Colonic mucosa (tissue), 4 donors: ENCODE measurements at regions of chr1 and their contacts with region 1.

Region 1: GRCh38 chr1:35564037-35564883 is 6.7 kb downstream of the NCDN start:
- DNase-seq: peak; percentile 88
- H3K4me3 ChIP-seq: no peak overlapping the region
- H3K27ac ChIP-seq: no peak overlapping the region
- H3K4me1 ChIP-seq: no peaks in the 10 kb centered on the region
- H3K27me3 ChIP-seq: no peaks in the 10 kb centered on the region
- CTCF ChIP-seq: peak; percentile 79

Region 2: DNA sequence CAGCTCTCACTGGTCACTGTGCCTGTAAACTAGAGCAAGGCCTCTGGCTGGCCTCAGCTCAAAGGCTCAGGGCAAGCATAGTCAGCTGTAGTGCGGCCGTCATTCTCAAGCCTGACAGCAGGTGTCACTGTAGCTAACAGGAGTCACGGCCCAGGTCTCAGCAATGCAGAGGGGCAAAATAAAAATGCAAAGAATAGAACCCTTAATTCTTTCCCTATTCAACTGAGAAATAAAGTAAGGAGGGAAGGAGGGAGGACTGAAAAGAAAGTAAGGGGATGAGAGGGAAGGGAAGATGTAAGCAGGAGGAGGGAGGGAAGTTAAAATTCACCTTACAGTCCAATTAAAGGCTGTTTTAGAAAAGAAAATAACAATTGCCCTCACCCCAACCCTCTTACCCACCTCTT is 113.1 kb before region 1 on chr1:
- intact Hi-C with region 1: loop called (anchors 1 kb)
- DNase-seq: peak; percentile 79
- H3K4me3 ChIP-seq: no peak overlapping the region
- H3K27ac ChIP-seq: no peak overlapping the region
- H3K4me1 ChIP-seq: no peaks in the 10 kb centered on the region
- H3K27me3 ChIP-seq: no peaks in the 10 kb centered on the region
- CTCF ChIP-seq: peak; percentile 80

Region 3: DNA sequence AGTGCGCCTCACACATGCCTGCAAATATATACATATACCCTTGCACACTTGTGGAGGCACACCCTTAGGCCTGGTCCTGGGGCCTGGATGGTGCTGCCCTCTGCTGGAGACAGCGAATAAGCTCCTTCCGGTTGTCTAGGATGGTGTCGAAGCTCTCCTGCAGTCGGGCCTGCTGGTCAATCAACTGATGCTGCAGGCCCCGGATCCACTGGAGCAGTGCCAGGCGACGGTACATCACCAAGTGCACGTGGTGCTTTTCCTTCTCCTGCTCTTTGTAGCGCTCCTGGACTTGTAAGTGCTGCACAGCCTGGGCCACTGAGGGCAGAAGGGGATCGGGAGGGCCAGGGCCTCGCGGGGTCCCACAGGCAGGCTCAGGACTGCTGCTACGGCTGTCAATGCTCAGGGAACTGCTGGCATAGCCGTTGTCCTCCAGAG is 151.3 kb after region 1 on chr1:
- intact Hi-C with region 1: loop called (anchors 2 kb)
- DNase-seq: peak; percentile 82
- H3K4me3 ChIP-seq: no peak overlapping the region
- H3K27ac ChIP-seq: no peak overlapping the region
- H3K4me1 ChIP-seq: no peaks in the 10 kb centered on the region
- H3K27me3 ChIP-seq: no peaks in the 10 kb centered on the region
- CTCF ChIP-seq: peak; percentile 80

Region 4: GRCh38 chr1:35769759-35770446 is 205.6 kb after region 1 on chr1 and contains the start of gene CLSPN:
- intact Hi-C with region 1: loop called (anchors 5 kb)
- DNase-seq: peak; percentile 97
- H3K4me3 ChIP-seq: peak within 1 kb of the TSS; percentile 92
- H3K27ac ChIP-seq: peak within 1 kb of the TSS; percentile 76
- H3K4me1 ChIP-seq: no peaks in the 10 kb centered on the region
- H3K27me3 ChIP-seq: no peaks in the 10 kb centered on the region
- CTCF ChIP-seq: no peak
- total RNA-seq, gene CLSPN: 3.1 to 27.7 TPM